PC-9 (cell line): ENCODE measurements at regions of chr16 and their contacts with region 1.

Region 1: GRCh38 chr16:75244844-75245758 is 6.3 kb downstream of the BCAR1 start:
- DNase-seq: peak; percentile 93 to 96
- H3K4me3 ChIP-seq: peak overlapping the region; percentile 30; the same call in 1 of the 2 replicates
- H3K27ac ChIP-seq: peak overlapping the region; percentile 83
- H3K4me1 ChIP-seq: peaks cover 65% of the 10 kb centered on the region
- H3K27me3 ChIP-seq: no peaks in the 10 kb centered on the region
- CTCF ChIP-seq: no peak

Region 2: GRCh38 chr16:75234856-75235696 is 10.0 kb before region 1 on chr16:
- CTCF ChIA-PET with region 1: interaction called, 8 read pairs
- POLR2A ChIA-PET with region 1: interaction called, 20 read pairs
- intact Hi-C with region 1: no loop called
- DNase-seq: no peak
- H3K4me3 ChIP-seq: no peak overlapping the region
- H3K27ac ChIP-seq: no peak overlapping the region
- H3K4me1 ChIP-seq: peaks cover 12% of the 10 kb centered on the region
- H3K27me3 ChIP-seq: no peaks in the 10 kb centered on the region
- CTCF ChIP-seq: no peak

Region 3: DNA sequence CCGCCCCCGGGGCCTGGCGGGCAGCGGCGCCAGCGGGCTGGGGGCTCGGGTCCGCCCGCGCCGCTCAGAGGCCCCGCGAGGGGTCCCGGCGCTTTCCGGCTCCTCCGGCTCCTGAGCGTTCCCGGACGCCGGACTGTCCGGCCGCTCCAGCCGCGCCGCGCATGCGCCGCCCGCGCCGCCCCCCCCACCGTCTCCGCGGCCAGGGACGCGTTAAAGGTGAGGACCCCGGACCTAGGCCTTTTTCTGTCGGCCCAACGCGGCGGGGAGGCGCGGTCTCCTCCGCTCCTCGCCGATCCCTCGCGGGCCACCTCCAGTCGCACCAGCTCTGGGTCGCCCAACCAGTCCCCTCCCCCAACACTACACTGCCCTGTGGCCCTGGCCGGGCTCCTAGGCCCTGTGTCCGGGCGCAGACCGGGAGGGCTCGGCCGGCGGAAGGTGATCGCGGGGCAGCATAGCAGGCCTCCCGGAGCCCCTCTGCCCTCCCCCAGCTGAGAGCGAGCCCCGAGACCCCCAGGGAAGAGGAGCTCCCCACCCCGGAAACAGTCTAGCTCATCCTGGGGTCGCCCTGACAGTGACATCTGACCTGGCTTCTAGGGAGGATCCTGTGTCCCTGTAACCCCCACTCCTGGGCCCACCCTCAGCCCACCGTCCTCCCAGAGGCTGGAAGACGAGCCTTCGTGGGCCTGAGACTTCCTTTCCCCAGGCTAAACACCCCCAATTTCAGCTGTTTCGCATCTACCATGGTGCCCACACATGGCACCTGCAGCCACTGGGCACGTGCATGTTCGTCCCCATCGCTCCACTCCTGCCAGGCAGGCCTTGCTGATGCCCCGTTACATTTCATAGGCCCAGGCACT is 21.0 kb after region 1 on chr16:
- CTCF ChIA-PET with region 1: no interaction called
- POLR2A ChIA-PET with region 1: interaction called, 6 read pairs
- intact Hi-C with region 1: loop called (anchors 1 kb)
- DNase-seq: peak; percentile 76 to 91
- H3K4me3 ChIP-seq: peak overlapping the region; percentile 99
- H3K27ac ChIP-seq: peak overlapping the region; percentile 58
- H3K4me1 ChIP-seq: peaks cover 43% of the 10 kb centered on the region
- H3K27me3 ChIP-seq: no peaks in the 10 kb centered on the region
- CTCF ChIP-seq: no peak

Region 4: GRCh38 chr16:75279305-75279704 is 34.2 kb after region 1 on chr16:
- CTCF ChIA-PET with region 1: no interaction called
- POLR2A ChIA-PET with region 1: interaction called, 4 read pairs
- intact Hi-C with region 1: loop called (anchors 1 kb)
- DNase-seq: peak in 1 of 2 experiments; percentile 30
- H3K4me3 ChIP-seq: no peak overlapping the region; the same call in 1 of the 2 replicates
- H3K27ac ChIP-seq: peak overlapping the region; percentile 76
- H3K4me1 ChIP-seq: peaks cover 32% of the 10 kb centered on the region
- H3K27me3 ChIP-seq: no peaks in the 10 kb centered on the region
- CTCF ChIP-seq: no peak

Region 5: GRCh38 chr16:75305364-75306098 is 60.4 kb after region 1 on chr16:
- CTCF ChIA-PET with region 1: no interaction called
- POLR2A ChIA-PET with region 1: interaction called, 8 read pairs
- intact Hi-C with region 1: loop called (anchors 1 kb)
- DNase-seq: peak; percentile 85 to 100
- H3K4me3 ChIP-seq: peak overlapping the region; percentile 25; the same call in 1 of the 2 replicates
- H3K27ac ChIP-seq: peak overlapping the region; percentile 93
- H3K4me1 ChIP-seq: peaks cover 38% of the 10 kb centered on the region
- H3K27me3 ChIP-seq: no peaks in the 10 kb centered on the region
- CTCF ChIP-seq: no peak

Region 6: DNA sequence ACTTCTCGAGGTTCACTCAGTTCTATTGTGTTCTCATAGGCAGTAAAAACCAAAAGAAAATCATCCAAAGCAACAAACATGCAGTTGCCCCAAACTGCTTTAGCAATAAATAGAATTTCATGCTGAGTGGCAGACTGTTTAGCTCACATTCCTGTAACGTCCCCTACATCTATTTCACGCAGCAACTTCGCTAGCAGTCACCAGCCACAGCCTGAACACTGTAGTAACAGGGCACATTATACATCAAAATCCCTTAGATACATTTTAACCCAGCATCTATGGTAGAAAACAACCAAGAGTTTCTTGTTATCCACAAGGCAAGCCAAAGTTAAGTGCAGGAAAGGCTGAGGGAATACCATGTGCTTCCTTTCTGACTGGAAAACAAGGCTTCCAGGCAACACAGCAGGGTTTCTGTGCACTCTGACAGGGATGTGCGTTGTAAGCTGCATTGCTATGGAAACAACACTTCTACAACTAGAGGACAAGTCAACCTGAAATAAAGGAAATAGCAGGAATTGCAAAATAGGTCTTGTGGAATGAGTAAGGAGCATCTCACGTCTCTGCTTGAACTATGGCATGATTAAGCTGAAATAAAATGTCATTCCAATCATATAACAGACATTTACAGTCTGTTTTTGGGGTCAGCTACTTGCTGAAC is 132.8 kb after region 1 on chr16:
- CTCF ChIA-PET with region 1: interaction called, 4 read pairs
- POLR2A ChIA-PET with region 1: interaction called, 5 read pairs
- intact Hi-C with region 1: loop called (anchors 1 kb)
- DNase-seq: peak; percentile 49 to 98
- H3K4me3 ChIP-seq: peak overlapping the region; percentile 1; the same call in 1 of the 2 replicates
- H3K27ac ChIP-seq: peak overlapping the region; percentile 54
- H3K4me1 ChIP-seq: peaks cover 51% of the 10 kb centered on the region
- H3K27me3 ChIP-seq: no peaks in the 10 kb centered on the region
- CTCF ChIP-seq: no peak

Region 7: DNA sequence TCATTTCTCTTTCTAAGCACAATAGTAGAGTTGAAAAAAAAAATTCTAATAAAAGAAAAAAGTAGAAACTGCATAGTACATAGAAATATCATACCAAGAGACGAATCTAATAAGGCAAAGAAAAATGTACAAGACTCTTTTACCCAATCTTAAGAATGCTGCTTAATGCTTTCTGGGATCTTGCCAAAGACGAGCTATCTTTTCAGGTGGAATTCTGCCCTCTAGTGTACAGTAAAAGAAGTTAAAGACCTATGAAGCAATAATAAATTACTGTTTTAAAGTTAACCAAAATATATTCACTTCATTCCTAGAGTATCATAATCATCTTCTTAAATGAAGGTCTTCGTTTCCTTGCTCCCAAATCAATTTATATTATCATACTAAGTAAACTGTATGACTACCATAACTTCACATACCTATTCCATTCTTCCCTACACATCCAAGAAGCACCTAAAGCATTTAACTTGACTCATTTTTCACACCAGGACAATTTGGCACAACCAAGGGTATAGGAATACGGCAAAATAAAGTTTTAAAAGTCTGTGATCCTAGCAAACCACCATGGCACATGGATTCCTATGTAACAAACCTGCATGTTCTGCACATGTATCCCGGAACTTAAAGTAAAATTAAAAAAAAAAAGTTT is 140.5 kb after region 1 on chr16:
- CTCF ChIA-PET with region 1: no interaction called
- POLR2A ChIA-PET with region 1: no interaction called
- intact Hi-C with region 1: loop called (anchors 1 kb)
- DNase-seq: peak in 1 of 2 experiments; percentile 64
- H3K4me3 ChIP-seq: no peak overlapping the region
- H3K27ac ChIP-seq: peak overlapping the region; percentile 20; the same call in 1 of the 2 replicates
- H3K4me1 ChIP-seq: peaks cover 6% of the 10 kb centered on the region
- H3K27me3 ChIP-seq: no peaks in the 10 kb centered on the region
- CTCF ChIP-seq: peak; percentile 87

Region 8: GRCh38 chr16:76653390-76654026 is 1408.4 kb after region 1 on chr16:
- CTCF ChIA-PET with region 1: no interaction called
- POLR2A ChIA-PET with region 1: no interaction called
- intact Hi-C with region 1: no loop called
- DNase-seq: peak; percentile 4 to 39
- H3K4me3 ChIP-seq: no peak overlapping the region
- H3K27ac ChIP-seq: no peak overlapping the region
- H3K4me1 ChIP-seq: no peaks in the 10 kb centered on the region
- H3K27me3 ChIP-seq: 0 out of 2 replicates have a peak, but pooled peaks cover under 1% of the 10 kb centered on the region
- CTCF ChIP-seq: peak; percentile 70